CD4-positive, alpha-beta T cell (primary cell): ENCODE measurements at regions of chr19 and their contacts with region 1.

Region 1: GRCh38 chr19:18951665-18952281 is 10.8 kb upstream of the HOMER3 start:
- DNase-seq: no peak
- ATAC-seq: no peak
- H3K4me3 ChIP-seq: no peak overlapping the region
- H3K4me3 Mint-ChIP-seq: no peak overlapping the region
- H3K27ac ChIP-seq: no peak overlapping the region
- H3K27ac Mint-ChIP-seq: no peak overlapping the region
- H3K4me1 ChIP-seq: peaks cover 17% of the 10 kb centered on the region
- H3K4me1 Mint-ChIP-seq: no peaks in the 10 kb centered on the region
- H3K27me3 ChIP-seq: no peaks in the 10 kb centered on the region
- H3K27me3 Mint-ChIP-seq: peaks cover 5% of the 10 kb centered on the region
- CTCF ChIP-seq: no peak

Region 2: DNA sequence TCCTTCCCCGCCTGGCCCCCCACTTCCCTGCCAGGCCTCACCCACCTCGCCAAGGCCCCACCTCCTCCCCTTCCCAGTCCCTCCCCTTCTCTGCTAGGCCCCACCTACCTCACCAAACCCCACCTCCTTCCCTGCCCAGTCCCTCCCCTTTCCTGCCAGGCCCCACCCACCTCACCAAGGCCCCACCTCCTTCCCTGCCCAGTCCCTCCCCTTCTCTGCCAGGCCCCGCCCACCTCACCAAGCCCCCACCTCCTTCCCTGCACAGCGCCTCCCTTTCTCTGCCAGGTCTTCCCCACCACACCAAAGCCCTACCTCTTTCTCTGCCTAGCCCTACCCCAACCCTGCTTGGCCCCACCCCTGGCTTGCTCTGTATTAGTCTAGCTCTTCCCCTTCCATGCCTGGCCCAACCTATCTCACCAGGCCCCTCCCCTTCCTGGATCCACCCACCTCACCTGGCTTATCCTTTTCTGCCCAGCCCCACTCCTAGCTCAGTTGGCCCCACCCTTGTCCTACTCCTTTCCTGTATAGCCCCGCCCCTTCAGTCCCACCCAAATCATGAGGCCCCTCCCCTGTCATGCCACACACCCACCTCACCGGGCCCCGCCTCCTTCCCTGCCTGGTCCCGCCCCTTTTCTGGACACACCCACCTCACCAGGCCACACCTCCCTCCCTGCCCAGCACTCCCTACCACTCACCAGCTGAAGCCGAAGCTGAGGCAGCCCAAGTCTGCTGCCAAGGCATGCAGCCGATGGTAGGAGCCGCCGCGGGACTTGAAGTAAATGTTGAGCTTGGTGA is 72.0 kb before region 1 on chr19:
- CTCF ChIA-PET with region 1: no interaction called
- POLR2A ChIA-PET with region 1: no interaction called
- intact Hi-C with region 1: loop called in 1 of 2 experiments (anchors 10 kb)
- DNase-seq: peak in 4 of 14 experiments; percentile 21 to 71 (median 43)
- ATAC-seq: peak; percentile 80
- H3K4me3 ChIP-seq: no peak overlapping the region
- H3K4me3 Mint-ChIP-seq: no peak overlapping the region
- H3K27ac ChIP-seq: no peak overlapping the region
- H3K27ac Mint-ChIP-seq: no peak overlapping the region
- H3K4me1 ChIP-seq: no peaks in the 10 kb centered on the region
- H3K4me1 Mint-ChIP-seq: no peaks in the 10 kb centered on the region
- H3K27me3 ChIP-seq: no peaks in the 10 kb centered on the region
- H3K27me3 Mint-ChIP-seq: no peaks in the 10 kb centered on the region
- CTCF ChIP-seq: no peak

Region 3: DNA sequence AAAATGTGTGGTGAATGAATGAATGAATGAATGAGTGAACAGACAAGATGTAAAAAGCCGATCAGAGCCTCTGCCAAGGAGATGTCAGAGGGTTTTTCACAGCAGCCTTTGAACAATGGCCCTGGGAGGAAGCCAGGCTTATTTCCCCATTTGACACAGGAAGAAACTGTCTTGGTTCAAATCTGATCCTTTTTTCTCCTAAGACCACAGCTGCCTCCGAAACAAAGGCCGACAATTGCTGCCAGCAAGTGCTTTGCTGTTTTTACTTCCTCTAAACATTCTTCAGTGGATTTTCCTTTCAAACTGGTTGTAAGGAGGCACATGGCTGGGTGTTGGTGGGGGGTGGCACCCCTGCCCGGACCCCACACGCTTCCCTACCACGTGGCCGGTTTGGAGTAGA is 33.5 kb after region 1 on chr19:
- CTCF ChIA-PET with region 1: no interaction called
- POLR2A ChIA-PET with region 1: no interaction called
- intact Hi-C with region 1: no loop called
- DNase-seq: peak in 2 of 14 experiments; percentile 10 to 24
- ATAC-seq: no peak
- H3K4me3 ChIP-seq: no peak overlapping the region
- H3K4me3 Mint-ChIP-seq: no peak overlapping the region
- H3K27ac ChIP-seq: no peak overlapping the region
- H3K27ac Mint-ChIP-seq: no peak overlapping the region
- H3K4me1 ChIP-seq: no peaks in the 10 kb centered on the region
- H3K4me1 Mint-ChIP-seq: no peaks in the 10 kb centered on the region
- H3K27me3 ChIP-seq: peaks cover 8 to 9% of the 10 kb centered on the region in 2 experiments
- H3K27me3 Mint-ChIP-seq: peaks cover 22% of the 10 kb centered on the region
- CTCF ChIP-seq: no peak